Dendritic cell treated with granulocyte-macrophage colony-stimulating factor and Interleukin-4, amounts not matched to agents 40 ng/mL and 50 ng/mL, for 4 days (primary cell): ENCODE measurements at regions of chr12 and their contacts with region 1.

Region 1: DNA sequence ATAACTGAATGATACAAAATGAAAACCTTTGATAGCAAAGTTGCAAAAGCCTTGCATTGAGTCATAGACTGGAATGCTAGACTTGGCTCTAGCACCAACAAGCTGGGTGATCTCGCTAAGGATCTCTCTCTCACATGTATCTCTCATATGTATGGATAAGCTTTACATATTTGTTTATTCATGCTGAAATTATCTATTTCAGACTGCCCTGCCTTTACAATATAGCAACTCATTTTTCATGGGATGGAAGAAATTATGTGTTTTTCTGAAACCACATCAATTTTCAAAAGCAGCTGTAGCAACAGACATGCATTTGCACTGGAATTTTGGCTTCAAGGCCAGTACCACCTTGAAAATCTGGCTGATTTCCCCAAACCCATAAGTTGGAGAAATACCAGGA is 11.4 kb downstream of the RERG start:
- H3K4me3 Mint-ChIP-seq: no peak overlapping the region
- H3K27ac Mint-ChIP-seq: no peak overlapping the region
- H3K4me1 Mint-ChIP-seq: no peaks in the 10 kb centered on the region
- H3K27me3 Mint-ChIP-seq: no peaks in the 10 kb centered on the region

Region 2: DNA sequence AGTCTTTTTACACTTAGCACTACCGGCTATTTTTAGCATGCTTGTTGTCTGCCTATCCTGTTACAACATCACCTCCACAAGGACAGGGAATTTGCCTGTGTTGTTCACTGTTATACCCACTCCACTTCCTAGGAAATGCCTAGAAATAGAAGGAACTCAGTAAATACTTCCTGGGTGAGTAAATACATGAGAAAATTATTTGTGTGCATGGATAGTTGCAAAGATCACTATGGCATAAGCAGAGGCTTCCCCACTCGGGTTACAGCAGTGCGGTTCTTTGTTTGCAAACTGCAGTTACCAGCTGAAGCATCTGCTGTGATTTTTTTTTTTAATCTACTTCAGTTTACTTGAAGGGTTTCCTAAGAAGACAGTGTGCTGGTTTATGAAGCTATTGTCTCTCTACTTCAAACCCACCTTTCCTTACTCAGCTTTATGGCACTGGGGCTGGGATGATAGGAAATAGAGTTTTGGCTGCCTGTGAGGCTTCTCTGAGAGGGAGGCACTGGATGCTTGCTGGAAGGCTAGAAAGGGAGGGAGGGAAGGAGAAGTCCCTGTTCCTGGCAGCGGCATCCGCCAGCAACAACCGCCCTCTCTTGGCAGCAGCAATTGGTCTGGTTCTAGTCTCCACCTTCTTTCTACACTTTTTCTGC is 207.9 kb before region 1 on chr12:
- intact Hi-C with region 1: loop called (anchors 10 kb)
- H3K4me3 Mint-ChIP-seq: no peak overlapping the region
- H3K27ac Mint-ChIP-seq: no peak overlapping the region
- H3K4me1 Mint-ChIP-seq: no peaks in the 10 kb centered on the region
- H3K27me3 Mint-ChIP-seq: peaks cover 5% of the 10 kb centered on the region